Natural killer cell (primary cell): ENCODE measurements at regions of chr6 and their contacts with region 1.

Region 1: GRCh38 chr6:135627092-135627715 is 129.7 kb upstream of the AHI1 start:
- DNase-seq: no peak
- ATAC-seq: no peak
- H3K4me3 ChIP-seq: no peak overlapping the region
- H3K4me3 Mint-ChIP-seq: no peak overlapping the region
- H3K27ac ChIP-seq: no peak overlapping the region
- H3K27ac Mint-ChIP-seq: peak overlapping the region in 1 of 2 donors; percentile 27
- H3K4me1 ChIP-seq: no peaks in the 10 kb centered on the region
- H3K4me1 Mint-ChIP-seq: peaks cover 29 to 39% of the 10 kb centered on the region in 2 donors
- H3K27me3 ChIP-seq: no peaks in the 10 kb centered on the region
- H3K27me3 Mint-ChIP-seq: no peaks in the 10 kb centered on the region
- CTCF ChIP-seq: no peak

Region 2: DNA sequence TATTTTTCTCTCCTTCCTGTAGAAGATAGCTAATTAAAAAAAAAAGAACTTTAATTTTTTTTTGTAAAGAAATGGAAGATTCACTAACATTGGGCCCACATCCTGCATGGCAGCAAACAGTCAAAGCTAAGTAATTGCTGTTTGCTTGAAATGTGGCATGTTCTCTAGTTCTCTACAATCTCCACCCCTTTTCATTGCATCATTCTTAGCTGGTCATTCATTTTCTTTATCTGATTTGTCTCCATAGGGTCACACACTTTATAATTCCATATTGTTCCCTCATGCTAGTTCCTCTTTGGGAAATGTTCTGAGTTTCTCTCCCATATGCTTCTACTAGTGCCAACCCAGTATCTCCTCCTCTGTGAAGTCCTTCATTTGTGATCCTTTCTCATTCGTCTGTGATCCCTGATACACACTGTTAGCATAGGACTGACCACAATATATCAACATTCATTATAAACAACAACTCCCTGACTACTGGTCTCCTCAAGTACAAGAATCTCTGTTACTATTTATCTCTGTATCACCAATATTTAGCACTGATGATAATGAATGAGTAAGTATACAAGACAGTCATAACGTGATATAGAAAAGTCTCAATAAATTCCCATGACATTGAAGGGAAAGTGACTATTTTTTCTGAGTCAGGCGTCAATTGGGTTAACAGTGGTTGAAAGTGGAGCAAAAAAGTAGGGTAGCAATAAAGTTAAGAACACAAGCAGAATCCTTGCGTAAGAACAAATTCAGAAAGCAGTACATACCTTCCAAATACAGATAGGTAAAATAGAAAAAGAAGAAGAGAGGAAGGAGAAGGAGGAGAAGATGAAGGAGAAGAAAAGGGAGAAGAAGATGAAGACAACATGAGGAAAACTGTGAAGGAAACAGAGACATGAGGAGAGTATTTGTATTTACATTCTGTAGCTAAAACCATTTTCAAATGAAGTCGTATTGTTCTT is 479.3 kb before region 1 on chr6:
- intact Hi-C with region 1: no loop called
- DNase-seq: no peak
- ATAC-seq: no peak
- H3K4me3 ChIP-seq: no peak overlapping the region
- H3K4me3 Mint-ChIP-seq: no peak overlapping the region
- H3K27ac ChIP-seq: no peak overlapping the region
- H3K27ac Mint-ChIP-seq: no peak overlapping the region
- H3K4me1 ChIP-seq: no peaks in the 10 kb centered on the region
- H3K4me1 Mint-ChIP-seq: peaks cover 6 to 18% of the 10 kb centered on the region in 2 donors
- H3K27me3 ChIP-seq: no peaks in the 10 kb centered on the region
- H3K27me3 Mint-ChIP-seq: no peaks in the 10 kb centered on the region
- CTCF ChIP-seq: no peak

Region 3: GRCh38 chr6:135568366-135568765 is 58.8 kb before region 1 on chr6:
- intact Hi-C with region 1: loop called (anchors 1 kb)
- DNase-seq: peak; percentile 30 to 74
- ATAC-seq: peak; percentile 88 to 99 (median 92)
- H3K4me3 ChIP-seq: no peak overlapping the region
- H3K4me3 Mint-ChIP-seq: peak overlapping the region; percentile 62
- H3K27ac ChIP-seq: no peak overlapping the region
- H3K27ac Mint-ChIP-seq: peak overlapping the region; percentile 37 to 81
- H3K4me1 ChIP-seq: peaks cover 24% of the 10 kb centered on the region
- H3K4me1 Mint-ChIP-seq: peaks cover 27 to 41% of the 10 kb centered on the region in 2 donors
- H3K27me3 ChIP-seq: no peaks in the 10 kb centered on the region
- H3K27me3 Mint-ChIP-seq: no peaks in the 10 kb centered on the region
- CTCF ChIP-seq: no peak

Region 4: GRCh38 chr6:135606392-135606791 is 20.8 kb before region 1 on chr6:
- intact Hi-C with region 1: no loop called
- DNase-seq: no peak
- ATAC-seq: no peak
- H3K4me3 ChIP-seq: no peak overlapping the region
- H3K4me3 Mint-ChIP-seq: no peak overlapping the region
- H3K27ac ChIP-seq: no peak overlapping the region
- H3K27ac Mint-ChIP-seq: no peak overlapping the region
- H3K4me1 ChIP-seq: no peaks in the 10 kb centered on the region
- H3K4me1 Mint-ChIP-seq: no peaks in the 10 kb centered on the region
- H3K27me3 ChIP-seq: no peaks in the 10 kb centered on the region
- H3K27me3 Mint-ChIP-seq: no peaks in the 10 kb centered on the region
- CTCF ChIP-seq: no peak